Activated naive CD4-positive, alpha-beta T cell treated with anti-CD3 and anti-CD28 coated beads for 36 hours (primary cell): ENCODE measurements at regions of chr9 and their contacts with region 1.

Region 1: DNA sequence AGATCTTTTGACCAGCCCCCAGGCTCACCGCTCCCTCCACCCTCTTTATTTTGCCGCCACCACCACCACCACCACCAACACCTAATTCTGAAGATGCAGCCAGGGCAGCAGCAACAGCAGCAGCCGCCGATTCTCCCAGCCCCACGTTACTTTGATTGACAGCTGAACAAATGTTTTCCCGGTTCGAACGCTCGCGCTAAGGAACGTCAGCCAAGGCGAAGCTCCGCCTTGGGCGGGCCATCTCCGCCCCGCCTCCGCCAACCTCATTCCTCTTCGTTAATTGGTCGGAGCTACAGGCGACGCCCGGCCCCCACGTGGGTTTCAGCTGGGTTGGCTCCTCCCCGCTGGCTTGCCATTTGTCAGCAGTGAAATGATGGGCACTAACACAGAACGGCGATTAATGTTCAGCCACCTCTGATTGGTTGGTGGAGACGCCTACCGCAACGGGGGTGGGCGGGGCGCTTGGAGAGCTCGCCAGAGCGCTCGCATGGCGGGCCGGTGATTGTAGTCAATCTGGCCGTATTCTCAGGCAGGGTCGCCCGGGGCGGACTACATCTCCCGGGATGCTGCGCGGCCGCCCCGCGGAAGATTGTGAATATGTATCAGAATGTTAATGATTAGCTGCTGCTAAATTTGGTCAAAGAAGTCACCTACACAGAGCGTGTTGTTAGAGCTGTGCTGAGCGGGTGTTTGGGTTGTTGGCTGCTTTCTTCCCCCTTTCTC is at the start of gene TLE4:
- DNase-seq: peak; percentile 99
- H3K4me3 Mint-ChIP-seq: peak within 1 kb of the TSS; percentile 80
- H3K27ac Mint-ChIP-seq: peak within 1 kb of the TSS; percentile 46
- H3K4me1 Mint-ChIP-seq: peaks cover 26% of the 10 kb centered on the region
- H3K27me3 Mint-ChIP-seq: peaks cover 6% of the 10 kb centered on the region
- total RNA-seq, gene TLE4: 11.2 to 13.1 TPM

Region 2: GRCh38 chr9:79403495-79403894 is 168.0 kb before region 1 on chr9:
- CTCF ChIA-PET with region 1: no interaction called
- intact Hi-C with region 1: loop called (anchors 5 kb)
- DNase-seq: peak; percentile 13
- H3K4me3 Mint-ChIP-seq: no peak overlapping the region
- H3K27ac Mint-ChIP-seq: no peak overlapping the region
- H3K4me1 Mint-ChIP-seq: no peaks in the 10 kb centered on the region
- H3K27me3 Mint-ChIP-seq: no peaks in the 10 kb centered on the region

Region 3: GRCh38 chr9:79542735-79543620 is 28.5 kb before region 1 on chr9:
- CTCF ChIA-PET with region 1: interaction called, 3 read pairs
- intact Hi-C with region 1: loop called (anchors 1 kb)
- DNase-seq: no peak
- H3K4me3 Mint-ChIP-seq: no peak overlapping the region
- H3K27ac Mint-ChIP-seq: no peak overlapping the region
- H3K4me1 Mint-ChIP-seq: peaks cover 18% of the 10 kb centered on the region
- H3K27me3 Mint-ChIP-seq: peaks cover 2% of the 10 kb centered on the region

Region 4: DNA sequence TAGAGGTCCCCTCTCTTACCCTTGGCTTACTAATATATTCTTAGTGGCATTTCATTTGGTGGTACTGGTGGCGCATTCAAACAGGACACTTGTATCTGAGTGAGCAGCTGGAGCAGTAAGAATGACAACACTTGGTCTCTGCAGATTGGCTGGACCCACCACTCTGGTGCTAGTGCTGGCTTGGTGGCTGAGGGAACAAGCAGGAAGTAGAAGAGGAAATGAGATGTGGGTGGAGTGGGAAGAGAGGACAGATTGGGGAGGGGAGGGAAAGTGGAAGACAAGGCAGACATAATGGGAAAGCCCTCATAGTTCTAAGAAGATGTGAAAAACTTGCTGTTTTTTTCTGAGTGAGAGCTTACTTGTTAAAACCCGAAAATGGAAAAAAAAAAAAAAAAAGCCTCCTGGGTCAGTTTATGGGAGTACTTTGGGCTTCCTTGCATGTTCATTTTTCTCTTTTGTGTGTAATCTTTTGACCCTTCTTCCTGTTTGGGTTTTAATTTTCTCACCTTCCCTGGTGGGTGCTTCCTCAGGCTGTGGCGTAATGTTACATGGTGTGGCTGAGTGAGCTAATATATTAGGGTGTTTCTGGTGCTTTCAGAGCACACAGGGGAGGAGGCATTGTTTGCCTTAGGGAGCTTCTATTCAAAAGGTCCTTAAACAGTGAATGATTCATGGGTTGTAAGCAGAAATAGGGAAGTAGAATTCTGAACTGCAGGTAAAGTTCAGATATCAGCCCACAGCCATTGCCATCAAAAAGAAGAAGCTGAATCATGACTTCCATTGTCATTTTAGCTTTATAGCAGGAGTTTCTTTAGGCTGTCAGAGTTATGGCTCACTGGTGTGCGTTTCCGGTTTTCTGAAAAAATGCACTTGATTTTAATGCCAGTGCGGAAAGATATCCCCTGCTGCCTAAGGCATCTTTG is 52.6 kb after region 1 on chr9:
- CTCF ChIA-PET with region 1: no interaction called
- intact Hi-C with region 1: loop called (anchors 1 kb)
- DNase-seq: peak; percentile 59
- H3K4me3 Mint-ChIP-seq: peak overlapping the region; percentile 42
- H3K27ac Mint-ChIP-seq: peak overlapping the region; percentile 81
- H3K4me1 Mint-ChIP-seq: peaks cover 37% of the 10 kb centered on the region
- H3K27me3 Mint-ChIP-seq: no peaks in the 10 kb centered on the region

Region 5: DNA sequence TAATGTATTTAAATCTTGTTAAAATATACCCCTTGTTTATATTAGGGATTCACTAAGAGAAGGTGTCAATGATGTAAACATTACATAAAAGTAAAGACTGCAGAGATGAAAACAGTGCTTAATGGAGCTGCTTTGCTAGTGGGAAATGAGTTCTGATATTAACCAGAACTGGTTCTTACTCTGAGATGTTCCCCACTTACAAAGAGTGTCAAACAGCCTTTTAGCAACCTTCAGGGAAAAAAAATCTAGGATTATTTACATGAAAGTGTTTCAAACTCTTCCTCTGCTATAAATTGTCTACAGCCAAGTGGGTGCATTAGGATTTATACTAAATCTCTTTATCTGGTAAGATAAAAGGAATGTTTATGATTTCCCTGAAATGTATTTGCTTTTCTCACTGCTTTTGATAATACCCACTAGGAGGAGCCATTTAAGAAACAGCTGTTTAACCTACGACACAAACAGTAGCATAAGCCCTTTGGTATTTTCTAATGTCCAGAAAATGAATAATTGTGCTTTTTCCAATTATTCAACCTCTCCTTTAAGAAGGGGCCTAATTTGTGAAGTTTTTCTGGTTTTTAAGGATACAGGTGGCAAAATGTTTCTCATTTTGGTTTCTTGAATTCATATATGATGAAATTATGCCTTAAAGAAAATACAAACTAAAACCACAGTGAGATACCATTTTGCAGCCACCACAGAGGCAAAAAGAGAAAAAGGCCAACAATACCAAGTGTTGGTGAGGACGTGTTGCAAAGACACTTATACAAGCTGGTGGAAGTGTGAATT is 186.6 kb after region 1 on chr9:
- CTCF ChIA-PET with region 1: no interaction called
- intact Hi-C with region 1: no loop called
- DNase-seq: no peak
- H3K4me3 Mint-ChIP-seq: no peak overlapping the region
- H3K27ac Mint-ChIP-seq: no peak overlapping the region
- H3K4me1 Mint-ChIP-seq: peaks cover 3% of the 10 kb centered on the region
- H3K27me3 Mint-ChIP-seq: no peaks in the 10 kb centered on the region

Region 6: DNA sequence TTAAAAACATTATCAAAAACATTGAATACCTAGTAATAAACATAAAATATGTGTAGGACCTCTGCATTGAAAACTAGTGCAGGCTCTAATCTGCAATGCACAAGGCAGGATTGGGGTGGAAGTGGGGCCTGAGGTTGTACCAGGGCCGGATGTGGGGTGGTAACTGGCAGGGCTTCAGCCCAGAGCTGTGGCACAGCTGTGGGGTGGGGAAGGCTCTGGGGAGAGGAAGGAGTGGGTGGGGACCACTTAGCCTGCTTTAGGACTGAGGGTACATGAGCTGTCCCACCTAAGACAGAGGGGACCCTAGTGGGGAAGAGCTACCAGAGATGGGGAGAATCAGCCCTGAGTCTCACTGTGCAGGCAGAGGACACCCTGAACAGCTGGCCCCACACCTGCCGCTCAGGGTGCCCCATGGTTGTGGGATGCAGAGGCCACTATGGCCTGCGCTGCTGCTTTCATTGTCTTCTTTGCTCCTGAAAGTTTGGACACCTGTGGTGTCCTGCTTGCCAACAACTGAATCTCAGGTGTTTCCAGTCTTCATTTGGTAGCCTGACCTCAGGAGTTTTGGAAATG is 311.7 kb after region 1 on chr9:
- CTCF ChIA-PET with region 1: no interaction called
- intact Hi-C with region 1: loop called (anchors 10 kb)
- DNase-seq: peak; percentile 53
- H3K4me3 Mint-ChIP-seq: no peak overlapping the region
- H3K27ac Mint-ChIP-seq: no peak overlapping the region
- H3K4me1 Mint-ChIP-seq: peaks cover 62% of the 10 kb centered on the region
- H3K27me3 Mint-ChIP-seq: no peaks in the 10 kb centered on the region

Region 7: DNA sequence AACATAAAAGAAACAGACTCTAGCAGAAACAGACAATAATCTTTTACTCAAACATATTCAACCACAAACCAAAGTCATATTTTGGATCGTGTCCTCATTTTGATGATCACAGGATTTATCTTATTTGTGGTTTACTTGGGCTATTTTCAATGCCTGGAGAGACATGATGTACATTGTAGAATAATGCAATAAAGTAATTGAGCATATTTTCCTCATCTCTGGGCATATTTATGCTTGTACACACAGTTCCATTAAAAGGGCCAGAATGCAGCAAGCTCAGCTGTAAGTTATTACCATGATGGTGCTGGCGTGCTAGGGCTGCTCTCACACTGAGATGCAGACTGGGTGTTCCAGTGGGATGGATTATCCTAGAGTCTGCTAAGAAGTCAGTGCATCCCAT is 457.0 kb after region 1 on chr9:
- CTCF ChIA-PET with region 1: no interaction called
- intact Hi-C with region 1: no loop called
- DNase-seq: no peak
- H3K4me3 Mint-ChIP-seq: no peak overlapping the region
- H3K27ac Mint-ChIP-seq: no peak overlapping the region
- H3K4me1 Mint-ChIP-seq: no peaks in the 10 kb centered on the region
- H3K27me3 Mint-ChIP-seq: peaks cover 7% of the 10 kb centered on the region